H1 (cell line): ENCODE measurements at regions of chr11 and their contacts with region 1.

Region 1: GRCh38 chr11:75492181-75492820 is 33.4 kb downstream of the GDPD5 start:
- DNase-seq: peak in 1 of 2 experiments; percentile 21
- H3K4me3 ChIP-seq: no peak overlapping the region
- H3K27ac ChIP-seq: no peak overlapping the region
- H3K4me1 ChIP-seq: peaks cover 2 to 19% (median 13%) of the 10 kb centered on the region in 4 experiments
- H3K27me3 ChIP-seq: no peaks in the 10 kb centered on the region
- CTCF ChIP-seq: no peak
- EP300 ChIP-seq: no peak
- POLR2A ChIP-seq: no peak
- RAD21 ChIP-seq: no peak

Region 2: DNA sequence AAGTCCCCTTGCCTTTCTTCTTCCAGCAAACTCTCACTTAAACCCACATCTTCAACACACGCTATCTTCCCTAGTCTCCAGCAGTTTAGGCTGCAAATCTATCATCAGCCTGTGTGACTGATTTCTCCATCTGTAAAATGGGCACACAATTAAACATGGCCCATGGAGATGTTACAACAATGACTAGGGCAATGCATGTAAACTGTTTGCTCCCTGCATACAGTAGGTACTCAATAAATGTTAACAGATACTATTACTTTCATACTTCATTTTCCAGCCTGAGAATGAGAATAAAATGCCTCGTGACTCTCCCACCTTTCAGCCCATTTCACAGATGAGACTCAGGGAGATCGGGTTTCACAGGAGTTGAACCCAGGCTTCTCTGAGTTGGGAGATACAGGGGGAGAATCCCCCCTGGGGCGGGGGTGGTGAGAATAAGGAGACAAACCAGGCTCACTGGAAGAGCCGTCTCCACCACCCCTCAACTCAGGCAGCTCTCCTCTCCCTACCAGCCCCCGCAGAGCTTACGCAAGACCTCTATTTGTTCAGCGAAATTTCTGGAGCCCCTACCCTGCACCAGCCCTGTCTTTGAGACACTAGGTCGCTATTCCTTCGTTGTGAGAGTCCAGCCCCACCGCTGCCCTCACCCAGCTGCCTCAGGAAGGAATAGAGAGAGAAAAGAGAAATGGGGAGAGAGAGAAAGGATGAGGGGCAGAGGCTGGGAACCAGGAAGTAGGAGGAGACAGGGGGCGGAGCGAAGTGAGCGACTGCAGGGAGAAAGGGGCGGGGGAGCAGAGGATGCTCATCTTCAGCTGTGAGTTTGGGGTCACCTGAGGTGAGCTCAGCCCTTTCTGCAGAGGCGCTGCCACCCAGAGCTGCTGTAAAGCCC is 17.2 kb before region 1 on chr11:
- CTCF ChIA-PET with region 1: interaction called, 11 read pairs
- POLR2A ChIA-PET with region 1: interaction called, 21 read pairs
- DNase-seq: peak; percentile 38 to 86
- H3K4me3 ChIP-seq: peak overlapping the region in 2 of 4 experiments; percentile 17 to 55; a peak in 5 of 8 replicates
- H3K27ac ChIP-seq: no peak overlapping the region; the same call in 1 of the 2 replicates
- H3K4me1 ChIP-seq: peaks cover 3 to 8% (median 4%) of the 10 kb centered on the region in 4 experiments; a peak in 5 of 7 replicates
- H3K27me3 ChIP-seq: no peaks in the 10 kb centered on the region
- CTCF ChIP-seq: no peak
- EP300 ChIP-seq: no peak
- POLR2A ChIP-seq: peak in 1 of 2 experiments; percentile 47; a peak in 1 of 3 replicates
- RAD21 ChIP-seq: no peak

Region 3: GRCh38 chr11:75508044-75508561 is 15.8 kb after region 1 on chr11:
- CTCF ChIA-PET with region 1: interaction called, 16 read pairs
- POLR2A ChIA-PET with region 1: interaction called, 4 read pairs
- DNase-seq: no peak
- H3K4me3 ChIP-seq: no peak overlapping the region
- H3K27ac ChIP-seq: no peak overlapping the region
- H3K4me1 ChIP-seq: no peaks in the 10 kb centered on the region
- H3K27me3 ChIP-seq: no peaks in the 10 kb centered on the region
- CTCF ChIP-seq: no peak
- EP300 ChIP-seq: no peak
- POLR2A ChIP-seq: no peak
- RAD21 ChIP-seq: no peak

Region 4: GRCh38 chr11:75520688-75521087 is 28.4 kb after region 1 on chr11:
- CTCF ChIA-PET with region 1: interaction called, 176 read pairs
- POLR2A ChIA-PET with region 1: interaction called, 6 read pairs
- DNase-seq: no peak
- H3K4me3 ChIP-seq: no peak overlapping the region
- H3K27ac ChIP-seq: no peak overlapping the region
- H3K4me1 ChIP-seq: peaks cover 0 to 9% (median 1%) of the 10 kb centered on the region in 4 experiments; a peak in 2 of 7 replicates
- H3K27me3 ChIP-seq: peaks cover 14 to 31% (median 19%) of the 10 kb centered on the region in 4 experiments; a peak in 6 of 7 replicates
- CTCF ChIP-seq: no peak
- EP300 ChIP-seq: no peak
- POLR2A ChIP-seq: no peak
- RAD21 ChIP-seq: no peak

Region 5: DNA sequence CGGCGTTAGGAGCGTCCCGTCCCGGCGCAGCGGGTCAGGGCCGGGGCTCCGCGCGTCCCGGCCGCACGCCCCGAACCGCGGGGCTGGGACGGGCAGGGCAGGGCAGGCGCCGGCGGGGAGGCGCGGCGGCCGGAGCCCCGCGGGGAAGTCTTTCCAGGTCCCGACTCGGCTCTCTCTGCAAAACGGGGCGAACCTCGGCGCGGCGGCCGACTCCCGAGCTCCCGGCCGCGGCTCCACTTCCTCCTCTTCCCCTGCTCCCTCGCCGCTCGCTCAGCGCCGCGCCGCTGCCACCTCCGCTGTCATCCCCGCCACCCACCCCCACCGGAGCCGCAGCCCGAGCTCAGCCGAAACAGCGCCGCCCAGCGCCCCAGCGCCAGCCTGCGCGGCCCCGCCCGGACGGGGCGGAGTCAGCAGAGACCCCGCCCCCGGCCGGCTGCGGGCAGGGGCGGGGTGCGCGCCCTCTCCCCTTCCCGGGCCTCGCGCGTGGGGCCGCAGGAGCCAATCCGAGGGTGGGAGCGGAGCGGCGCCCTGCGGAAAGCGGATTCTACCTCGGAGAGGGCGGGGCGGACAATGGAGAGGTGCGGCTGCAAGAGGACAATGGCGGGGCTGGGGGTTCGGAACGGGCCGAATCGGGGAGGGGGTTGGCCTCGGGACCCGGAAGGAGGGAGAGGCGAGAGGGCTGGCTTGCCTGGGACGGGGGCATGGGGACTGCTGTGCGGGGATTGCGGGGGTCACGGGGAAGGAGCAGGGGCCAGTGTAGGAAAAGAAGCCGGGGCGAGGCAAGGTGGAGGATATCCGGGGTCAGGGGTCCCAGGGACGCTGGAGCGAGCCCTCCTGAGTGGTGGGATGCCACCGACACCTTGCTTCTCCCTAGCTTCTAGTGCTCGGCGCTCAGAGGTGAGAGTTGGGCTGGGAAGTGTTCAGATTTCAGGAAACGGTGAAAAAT is 33.6 kb after region 1 on chr11 and contains the start of gene GDPD5:
- CTCF ChIA-PET with region 1: interaction called, 176 read pairs
- POLR2A ChIA-PET with region 1: interaction called, 6 read pairs
- DNase-seq: peak; percentile 54 to 87
- H3K4me3 ChIP-seq: peak within 1 kb of the TSS; percentile 47 to 77 (median 76)
- H3K27ac ChIP-seq: no peak within 1 kb of the TSS
- H3K4me1 ChIP-seq: peaks cover 0 to 7% (median 1%) of the 10 kb centered on the region in 4 experiments; a peak in 2 of 7 replicates
- H3K27me3 ChIP-seq: peaks cover 14 to 33% (median 19%) of the 10 kb centered on the region in 4 experiments; a peak in 6 of 7 replicates
- CTCF ChIP-seq: peak; percentile 58 to 65 (median 64)
- EP300 ChIP-seq: no peak
- POLR2A ChIP-seq: peak in 1 of 2 experiments; percentile 54; a peak in 1 of 3 replicates
- RAD21 ChIP-seq: peak; percentile 15 to 51; a peak in 3 of 4 replicates
- total RNA-seq, gene GDPD5: 8.1 and 8.6 TPM in 2 replicates

Region 6: GRCh38 chr11:75689863-75690609 is 197.7 kb after region 1 on chr11:
- CTCF ChIA-PET with region 1: no interaction called
- POLR2A ChIA-PET with region 1: no interaction called
- DNase-seq: no peak
- H3K4me3 ChIP-seq: no peak overlapping the region
- H3K27ac ChIP-seq: no peak overlapping the region
- H3K4me1 ChIP-seq: no peaks in the 10 kb centered on the region
- H3K27me3 ChIP-seq: no peaks in the 10 kb centered on the region
- CTCF ChIP-seq: no peak
- EP300 ChIP-seq: no peak
- POLR2A ChIP-seq: no peak
- RAD21 ChIP-seq: no peak